MCF 10A (cell line): ENCODE measurements at regions of chr5 and their contacts with region 1.

Region 1: GRCh38 chr5:95924720-95925377 is 36.8 kb downstream of the ELL2 start:
- DNase-seq: peak; percentile 89
- H3K4me3 Mint-ChIP-seq: peak overlapping the region; percentile 54
- H3K27ac Mint-ChIP-seq: peak overlapping the region; percentile 87
- H3K4me1 Mint-ChIP-seq: peaks cover 50% of the 10 kb centered on the region
- H3K27me3 Mint-ChIP-seq: no peaks in the 10 kb centered on the region
- CTCF ChIP-seq: no peak

Region 2: DNA sequence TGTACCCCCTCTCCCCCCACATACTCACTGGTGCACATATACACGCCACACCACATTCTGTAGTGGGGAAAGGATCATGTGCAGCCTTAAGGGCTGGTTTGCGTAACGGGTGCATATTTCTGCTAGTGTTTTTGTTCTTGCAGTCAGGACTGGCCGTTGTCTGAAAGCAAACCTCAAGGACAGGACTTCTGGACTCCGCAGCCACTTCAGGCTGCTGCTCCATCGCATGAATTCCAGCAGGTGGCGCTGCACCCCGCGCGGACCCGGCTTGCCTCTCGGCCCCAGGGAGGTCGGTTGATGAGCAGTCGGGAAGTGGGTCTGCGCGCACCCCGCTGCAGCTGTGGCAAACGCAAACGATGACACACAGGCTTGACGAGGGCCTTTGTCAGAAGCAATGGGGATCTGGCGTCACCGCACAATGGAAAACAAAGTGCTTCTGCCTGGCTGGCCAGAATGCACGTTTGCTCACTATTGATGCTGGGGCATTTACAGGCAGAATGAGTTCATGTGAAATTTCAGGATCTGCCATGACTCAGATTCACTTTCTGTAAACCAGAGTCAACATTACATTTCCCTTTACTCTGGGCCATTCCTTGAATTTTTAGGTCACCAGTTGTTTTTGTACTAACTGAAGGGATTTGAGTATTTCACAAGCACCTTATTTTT is 66.1 kb before region 1 on chr5:
- CTCF ChIA-PET with region 1: no interaction called
- POLR2A ChIA-PET with region 1: interaction called, 12 read pairs
- intact Hi-C with region 1: no loop called
- DNase-seq: peak; percentile 96
- H3K4me3 Mint-ChIP-seq: peak overlapping the region; percentile 67
- H3K27ac Mint-ChIP-seq: peak overlapping the region; percentile 99
- H3K4me1 Mint-ChIP-seq: peaks cover 57% of the 10 kb centered on the region
- H3K27me3 Mint-ChIP-seq: no peaks in the 10 kb centered on the region
- CTCF ChIP-seq: peak; percentile 93

Region 3: DNA sequence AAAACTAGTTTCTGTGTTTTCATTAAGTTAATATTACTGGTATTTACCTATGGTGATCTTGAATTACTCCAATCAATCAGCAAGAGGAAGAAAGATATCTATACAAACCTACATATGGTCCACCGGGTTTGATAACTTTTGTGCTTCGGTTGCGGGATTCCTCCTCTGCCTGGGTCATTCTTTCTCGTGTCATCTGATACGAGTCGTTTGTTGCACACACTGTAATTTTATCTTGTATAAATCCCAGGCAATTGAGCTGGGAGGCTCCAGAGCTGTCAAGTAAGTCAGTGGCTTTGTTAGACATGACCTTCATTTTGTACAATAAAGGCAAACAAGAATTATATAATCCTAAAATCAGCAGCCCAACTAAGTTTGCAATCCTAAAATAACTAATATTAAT is 11.2 kb before region 1 on chr5:
- CTCF ChIA-PET with region 1: no interaction called
- POLR2A ChIA-PET with region 1: interaction called, 11 read pairs
- intact Hi-C with region 1: no loop called
- DNase-seq: no peak
- H3K4me3 Mint-ChIP-seq: no peak overlapping the region
- H3K27ac Mint-ChIP-seq: no peak overlapping the region
- H3K4me1 Mint-ChIP-seq: peaks cover 29% of the 10 kb centered on the region
- H3K27me3 Mint-ChIP-seq: no peaks in the 10 kb centered on the region
- CTCF ChIP-seq: no peak

Region 4: DNA sequence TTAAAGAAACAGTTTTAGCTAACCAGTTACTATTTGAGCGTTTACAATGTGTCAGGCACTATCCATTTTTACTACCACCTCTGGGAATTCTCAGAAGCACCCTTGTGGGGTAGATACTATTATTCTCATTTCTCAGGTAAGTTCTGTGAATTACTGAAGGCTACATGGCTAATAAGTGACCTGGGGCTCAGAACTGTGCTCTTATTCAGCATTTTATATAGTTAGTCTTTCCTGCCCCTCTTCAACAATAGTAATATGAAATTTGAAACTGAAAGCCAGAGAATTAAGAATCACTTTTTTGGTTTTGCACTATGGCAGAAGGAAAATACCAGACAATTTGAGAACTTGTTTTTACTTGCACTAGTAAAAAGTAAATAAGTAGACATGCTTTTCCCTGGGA is 25.0 kb after region 1 on chr5:
- CTCF ChIA-PET with region 1: interaction called, 6 read pairs
- POLR2A ChIA-PET with region 1: interaction called, 13 read pairs
- intact Hi-C with region 1: no loop called
- DNase-seq: no peak
- H3K4me3 Mint-ChIP-seq: no peak overlapping the region
- H3K27ac Mint-ChIP-seq: no peak overlapping the region
- H3K4me1 Mint-ChIP-seq: peaks cover 42% of the 10 kb centered on the region
- H3K27me3 Mint-ChIP-seq: no peaks in the 10 kb centered on the region
- CTCF ChIP-seq: no peak

Region 5: GRCh38 chr5:95956021-95956899 is 31.4 kb after region 1 on chr5:
- CTCF ChIA-PET with region 1: interaction called, 6 read pairs
- POLR2A ChIA-PET with region 1: interaction called, 43 read pairs
- intact Hi-C with region 1: no loop called
- DNase-seq: peak; percentile 61
- H3K4me3 Mint-ChIP-seq: peak overlapping the region; percentile 62
- H3K27ac Mint-ChIP-seq: peak overlapping the region; percentile 87
- H3K4me1 Mint-ChIP-seq: peaks cover 60% of the 10 kb centered on the region
- H3K27me3 Mint-ChIP-seq: no peaks in the 10 kb centered on the region
- CTCF ChIP-seq: no peak

Region 6: DNA sequence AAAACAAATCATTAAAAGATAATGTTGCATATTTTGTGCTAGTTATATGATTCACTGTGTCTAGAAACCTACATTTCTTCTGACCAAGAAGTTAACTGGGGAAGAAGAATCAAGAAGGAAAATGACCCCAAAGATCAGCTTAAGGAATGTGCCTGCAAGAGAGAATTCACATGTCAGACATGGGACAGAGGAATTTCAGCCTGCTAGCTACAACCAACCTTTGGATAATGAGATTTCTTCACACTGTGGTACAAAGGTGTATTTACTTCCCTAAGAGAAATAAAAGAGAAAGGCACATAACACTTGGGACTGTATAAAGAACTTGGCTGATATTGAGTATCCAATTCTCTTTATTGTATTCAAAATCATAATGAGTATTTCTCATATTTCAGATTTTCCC is 76.4 kb after region 1 on chr5:
- CTCF ChIA-PET with region 1: no interaction called
- POLR2A ChIA-PET with region 1: no interaction called
- intact Hi-C with region 1: no loop called
- DNase-seq: no peak
- H3K4me3 Mint-ChIP-seq: no peak overlapping the region
- H3K27ac Mint-ChIP-seq: no peak overlapping the region
- H3K4me1 Mint-ChIP-seq: no peaks in the 10 kb centered on the region
- H3K27me3 Mint-ChIP-seq: no peaks in the 10 kb centered on the region
- CTCF ChIP-seq: no peak

Region 7: DNA sequence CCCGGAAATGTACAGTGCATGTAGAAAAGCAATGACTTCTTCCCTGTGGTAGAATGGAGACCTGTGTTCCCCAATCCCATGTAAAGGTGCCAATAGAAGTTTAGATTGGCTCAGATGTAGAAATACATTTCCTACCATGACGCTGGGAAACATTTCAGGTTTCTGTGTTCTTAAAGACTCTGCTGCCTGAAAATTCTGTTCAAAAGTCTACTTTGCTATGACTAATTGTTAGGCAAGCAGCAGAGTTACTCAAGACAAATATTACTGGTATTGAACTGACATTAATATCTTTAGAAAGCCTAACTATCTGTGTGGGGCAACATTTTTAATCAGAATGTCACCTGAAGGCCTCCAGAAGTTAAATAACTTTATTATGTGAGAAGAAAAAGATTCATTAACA is 112.3 kb after region 1 on chr5:
- CTCF ChIA-PET with region 1: no interaction called
- POLR2A ChIA-PET with region 1: no interaction called
- intact Hi-C with region 1: no loop called
- DNase-seq: peak; percentile 62
- H3K4me3 Mint-ChIP-seq: no peak overlapping the region
- H3K27ac Mint-ChIP-seq: peak overlapping the region; percentile 72
- H3K4me1 Mint-ChIP-seq: peaks cover 18% of the 10 kb centered on the region
- H3K27me3 Mint-ChIP-seq: no peaks in the 10 kb centered on the region
- CTCF ChIP-seq: no peak

Region 8: DNA sequence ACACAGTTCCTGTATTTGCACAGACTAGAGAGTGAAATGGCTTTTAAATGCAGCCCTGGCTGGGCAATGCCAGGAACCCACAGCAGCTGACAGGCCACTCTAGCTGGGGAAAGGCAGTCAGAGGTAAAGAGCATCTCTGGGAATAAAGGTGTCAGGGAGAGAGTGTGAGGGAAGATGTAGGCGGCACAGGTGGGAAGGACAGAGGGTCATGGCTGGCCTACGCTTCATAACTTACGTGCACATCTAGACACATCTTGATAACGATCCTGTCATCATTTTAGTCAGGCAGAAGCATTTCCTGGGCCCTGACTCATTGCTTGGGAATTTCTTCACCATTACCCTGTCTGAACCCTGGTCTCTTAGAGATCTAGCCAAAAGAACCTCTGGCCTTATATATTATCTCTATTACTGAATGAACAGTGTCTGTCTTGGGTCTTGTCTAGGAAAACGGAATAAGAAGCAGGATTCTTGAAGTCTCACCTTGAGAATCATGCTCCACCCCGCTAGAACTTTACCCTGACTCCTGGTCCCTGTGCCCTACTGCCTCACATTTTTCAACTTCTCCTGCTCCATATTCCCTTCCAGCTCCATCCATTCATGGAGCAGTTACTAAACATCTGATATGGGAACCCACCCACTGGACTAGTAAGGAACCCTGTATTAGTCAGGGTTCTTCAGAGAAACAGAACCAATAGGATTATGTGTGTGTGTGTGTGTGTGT is 143.2 kb after region 1 on chr5:
- CTCF ChIA-PET with region 1: no interaction called
- POLR2A ChIA-PET with region 1: interaction called, 5 read pairs
- intact Hi-C with region 1: loop called (anchors 5 kb)
- DNase-seq: peak; percentile 82
- H3K4me3 Mint-ChIP-seq: no peak overlapping the region
- H3K27ac Mint-ChIP-seq: peak overlapping the region; percentile 41
- H3K4me1 Mint-ChIP-seq: peaks cover 37% of the 10 kb centered on the region
- H3K27me3 Mint-ChIP-seq: no peaks in the 10 kb centered on the region
- CTCF ChIP-seq: no peak

Region 9: DNA sequence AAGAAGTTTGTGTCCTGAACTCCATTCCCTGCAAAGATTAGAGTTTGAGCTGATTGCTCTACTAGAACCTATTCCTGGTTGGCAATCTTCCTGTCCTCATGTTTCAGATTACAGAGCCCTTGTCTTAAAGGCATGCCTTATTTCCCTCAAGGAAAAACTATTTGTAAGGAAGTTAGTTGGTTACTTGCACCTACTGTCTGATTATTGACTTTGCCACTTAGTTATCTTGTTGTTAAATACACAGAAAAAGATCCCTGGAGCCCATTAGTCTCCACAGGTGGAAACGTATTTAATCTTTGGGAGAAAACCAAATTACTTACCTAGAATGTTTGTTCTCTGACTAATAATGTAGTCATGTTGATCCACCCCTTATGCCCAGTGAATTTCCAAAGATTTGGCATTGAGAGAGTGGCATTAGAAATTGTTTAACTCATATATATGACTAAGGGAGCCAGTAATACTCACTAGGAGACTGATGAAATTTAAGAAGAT is 169.1 kb after region 1 on chr5:
- CTCF ChIA-PET with region 1: no interaction called
- POLR2A ChIA-PET with region 1: interaction called, 13 read pairs
- intact Hi-C with region 1: no loop called
- DNase-seq: peak; percentile 90
- H3K4me3 Mint-ChIP-seq: no peak overlapping the region
- H3K27ac Mint-ChIP-seq: peak overlapping the region; percentile 1
- H3K4me1 Mint-ChIP-seq: peaks cover 28% of the 10 kb centered on the region
- H3K27me3 Mint-ChIP-seq: no peaks in the 10 kb centered on the region
- CTCF ChIP-seq: no peak